Activated naive CD8-positive, alpha-beta T cell treated with anti-CD3 and anti-CD28 coated beads, Interleukin-2, amount 10 ng/mL, durations not matched to agents 7 days and 5 days (primary cell): ENCODE measurements at regions of chr5 and their contacts with region 1.

Region 1: GRCh38 chr5:154189819-154190594 is 526 bp upstream of the GALNT10 start:
- DNase-seq: peak; percentile 88
- ATAC-seq: peak; percentile 77
- H3K4me3 Mint-ChIP-seq: peak overlapping the region; percentile 87
- H3K27ac Mint-ChIP-seq: peak overlapping the region; percentile 79
- H3K4me1 Mint-ChIP-seq: peaks cover 29% of the 10 kb centered on the region
- H3K27me3 Mint-ChIP-seq: peaks cover 6% of the 10 kb centered on the region

Region 2: GRCh38 chr5:154038707-154039457 is 151.1 kb before region 1 on chr5 and contains the starts of genes FAM114A2 and MFAP3:
- POLR2A ChIA-PET with region 1: interaction called, 31 read pairs
- DNase-seq: peak; percentile 87
- ATAC-seq: peak; percentile 99
- H3K4me3 Mint-ChIP-seq: peak within 1 kb of the TSS; percentile 92
- H3K27ac Mint-ChIP-seq: peak within 1 kb of the TSS; percentile 96
- H3K4me1 Mint-ChIP-seq: peaks cover 36% of the 10 kb centered on the region
- H3K27me3 Mint-ChIP-seq: no peaks in the 10 kb centered on the region
- total RNA-seq, gene FAM114A2: 25.8 to 28.6 TPM
- total RNA-seq, gene MFAP3: 26.0 to 26.1 TPM

Region 3: GRCh38 chr5:154072414-154073171 is 117.4 kb before region 1 on chr5:
- POLR2A ChIA-PET with region 1: interaction called, 47 read pairs
- DNase-seq: peak; percentile 89
- ATAC-seq: peak; percentile 78
- H3K4me3 Mint-ChIP-seq: peak overlapping the region; percentile 64
- H3K27ac Mint-ChIP-seq: peak overlapping the region; percentile 78
- H3K4me1 Mint-ChIP-seq: peaks cover 40% of the 10 kb centered on the region
- H3K27me3 Mint-ChIP-seq: peaks cover 3% of the 10 kb centered on the region

Region 4: DNA sequence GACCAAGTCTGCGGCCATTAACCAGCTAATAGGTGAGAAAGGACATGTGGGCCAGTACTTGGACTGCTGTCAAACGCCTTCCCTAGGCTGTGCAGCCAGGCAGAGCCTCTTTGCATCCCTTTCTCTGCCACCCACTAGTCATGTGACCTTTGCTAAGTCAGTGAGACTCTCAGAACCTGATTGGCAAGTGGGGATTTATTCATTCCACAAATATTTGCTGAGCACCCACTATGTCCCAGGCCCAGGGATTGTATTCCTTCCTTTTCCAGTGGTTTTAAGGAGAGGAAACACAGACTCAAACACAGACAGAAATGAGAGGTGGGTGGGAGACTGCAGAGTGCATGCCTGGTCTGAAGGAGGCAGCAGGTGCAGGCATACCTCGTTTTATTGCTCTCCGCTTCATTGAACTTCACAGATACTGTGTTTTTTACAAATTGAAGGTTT is 71.1 kb before region 1 on chr5:
- POLR2A ChIA-PET with region 1: no interaction called
- DNase-seq: no peak
- ATAC-seq: no peak
- H3K4me3 Mint-ChIP-seq: no peak overlapping the region
- H3K27ac Mint-ChIP-seq: no peak overlapping the region
- H3K4me1 Mint-ChIP-seq: peaks cover 1% of the 10 kb centered on the region
- H3K27me3 Mint-ChIP-seq: peaks cover 2% of the 10 kb centered on the region

Region 5: GRCh38 chr5:154202379-154203260 is 12.6 kb after region 1 on chr5:
- POLR2A ChIA-PET with region 1: interaction called, 42 read pairs
- DNase-seq: peak; percentile 46
- ATAC-seq: peak; percentile 80
- H3K4me3 Mint-ChIP-seq: peak overlapping the region; percentile 76
- H3K27ac Mint-ChIP-seq: peak overlapping the region; percentile 86
- H3K4me1 Mint-ChIP-seq: peaks cover 40% of the 10 kb centered on the region
- H3K27me3 Mint-ChIP-seq: no peaks in the 10 kb centered on the region

Region 6: DNA sequence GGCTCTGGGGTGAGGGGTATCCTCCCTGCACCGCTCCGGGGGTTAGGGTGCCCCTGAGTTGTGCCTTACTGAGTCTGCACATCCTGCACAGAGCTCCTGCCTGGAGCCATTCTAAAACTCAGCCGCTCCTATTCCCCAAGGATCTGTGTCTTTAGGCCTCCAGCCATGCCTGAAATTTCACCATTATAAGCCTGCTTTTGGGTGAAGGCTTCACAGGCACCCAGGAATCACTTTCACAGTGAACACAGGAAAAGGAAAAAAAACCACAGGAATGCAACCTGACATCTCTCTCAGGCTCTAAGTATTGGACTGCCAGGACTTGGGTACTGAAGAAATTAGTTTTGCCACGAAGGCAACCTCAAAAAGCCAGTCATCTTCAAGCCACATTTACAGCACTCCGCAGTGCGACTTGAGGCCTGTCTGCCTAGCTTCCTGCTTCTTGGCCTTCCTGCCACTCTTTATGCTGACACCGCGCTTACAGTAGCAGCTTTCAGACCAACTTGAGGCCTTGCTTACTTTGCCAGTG is 31.4 kb after region 1 on chr5:
- POLR2A ChIA-PET with region 1: interaction called, 14 read pairs
- DNase-seq: no peak
- ATAC-seq: peak; percentile 98
- H3K4me3 Mint-ChIP-seq: peak overlapping the region; percentile 10
- H3K27ac Mint-ChIP-seq: peak overlapping the region; percentile 72
- H3K4me1 Mint-ChIP-seq: peaks cover 28% of the 10 kb centered on the region
- H3K27me3 Mint-ChIP-seq: no peaks in the 10 kb centered on the region

Region 7: GRCh38 chr5:154236536-154237375 is 46.7 kb after region 1 on chr5:
- POLR2A ChIA-PET with region 1: interaction called, 11 read pairs
- DNase-seq: no peak
- ATAC-seq: no peak
- H3K4me3 Mint-ChIP-seq: no peak overlapping the region
- H3K27ac Mint-ChIP-seq: no peak overlapping the region
- H3K4me1 Mint-ChIP-seq: peaks cover 22% of the 10 kb centered on the region
- H3K27me3 Mint-ChIP-seq: no peaks in the 10 kb centered on the region

Region 8: GRCh38 chr5:154405078-154405792 is 215.2 kb after region 1 on chr5:
- POLR2A ChIA-PET with region 1: interaction called, 15 read pairs
- DNase-seq: peak; percentile 81
- ATAC-seq: peak; percentile 99
- H3K4me3 Mint-ChIP-seq: peak overlapping the region; percentile 73
- H3K27ac Mint-ChIP-seq: peak overlapping the region; percentile 70
- H3K4me1 Mint-ChIP-seq: peaks cover 11% of the 10 kb centered on the region
- H3K27me3 Mint-ChIP-seq: no peaks in the 10 kb centered on the region